SK-N-SH (cell line): ENCODE measurements at regions of chr15 and their contacts with region 1.

Region 1: GRCh38 chr15:66386204-66387123 is at the start of gene MAP2K1:
- DNase-seq: peak; percentile 99
- H3K4me3 ChIP-seq: peak within 1 kb of the TSS; percentile 74 to 92
- H3K27ac ChIP-seq: peak within 1 kb of the TSS; percentile 74 to 78
- H3K4me1 ChIP-seq: peaks cover 6 to 9% of the 10 kb centered on the region in 2 experiments; a peak in 3 of 4 replicates
- H3K27me3 ChIP-seq: no peaks in the 10 kb centered on the region
- CTCF ChIP-seq: peak; percentile 75
- EP300 ChIP-seq: no peak
- RAD21 ChIP-seq: peak; percentile 21; the same call in 1 of the 2 replicates
- polyA plus RNA-seq, gene MAP2K1: 21.8 and 25.5 TPM in 2 replicates

Region 2: GRCh38 chr15:66356345-66357236 is 29.9 kb before region 1 on chr15 and contains the start of gene TIPIN:
- CTCF ChIA-PET with region 1: interaction called, 24 read pairs
- POLR2A ChIA-PET with region 1: no interaction called
- DNase-seq: peak; percentile 93
- H3K4me3 ChIP-seq: peak within 1 kb of the TSS; percentile 64 to 86
- H3K27ac ChIP-seq: peak within 1 kb of the TSS; percentile 47 to 67; a peak in 3 of 4 replicates
- H3K4me1 ChIP-seq: peaks cover 0 to 3% of the 10 kb centered on the region in 2 experiments; a peak in 1 of 4 replicates
- H3K27me3 ChIP-seq: no peaks in the 10 kb centered on the region
- CTCF ChIP-seq: no peak
- EP300 ChIP-seq: peak in 1 of 2 experiments; percentile 37; a peak in 2 of 4 replicates
- RAD21 ChIP-seq: no peak
- polyA plus RNA-seq, gene TIPIN: 5.7 and 6.0 TPM in 2 replicates

Region 3: DNA sequence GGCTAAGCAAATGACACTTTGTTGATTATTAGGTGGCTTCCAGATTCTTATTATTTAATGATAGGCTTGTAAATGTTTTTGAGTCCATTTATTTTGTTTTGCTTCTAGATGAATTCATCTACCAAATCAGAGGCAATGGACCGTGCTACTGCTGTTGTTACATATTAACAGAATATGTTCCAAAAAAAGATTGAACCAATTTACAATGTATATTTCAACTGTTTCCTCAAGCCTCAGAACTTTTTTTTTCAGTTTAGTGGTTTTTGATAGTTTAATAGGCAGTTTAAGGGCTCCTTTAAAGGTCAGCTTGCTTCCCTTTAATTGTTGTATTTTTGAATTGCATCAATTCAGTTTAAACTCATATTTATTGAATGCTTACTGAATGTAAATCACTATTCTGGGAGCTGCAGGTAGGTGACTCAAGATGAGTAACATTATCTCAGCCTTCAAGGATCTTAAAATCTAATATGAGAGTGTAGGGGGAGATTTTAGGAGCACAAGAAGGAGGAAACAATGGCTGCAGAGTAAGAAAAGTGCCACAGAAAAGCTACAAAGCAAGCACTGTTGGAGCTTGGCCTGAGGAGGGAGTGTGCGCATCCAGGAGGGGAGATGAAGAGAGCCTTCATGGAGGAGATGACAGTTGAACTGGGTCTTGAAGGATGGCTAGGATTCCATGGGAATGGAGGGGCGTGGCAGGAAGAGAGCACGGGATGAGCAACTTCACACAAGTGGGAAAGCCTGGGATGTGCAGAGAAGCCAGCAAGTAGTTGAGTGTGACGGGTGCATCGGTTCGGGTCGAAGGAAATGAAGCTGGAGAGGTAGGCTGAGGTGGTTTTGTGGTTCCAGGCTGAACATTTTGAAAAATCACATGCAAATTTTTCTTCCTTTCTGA is 14.9 kb after region 1 on chr15:
- CTCF ChIA-PET with region 1: interaction called, 15 read pairs
- POLR2A ChIA-PET with region 1: no interaction called
- DNase-seq: no peak
- H3K4me3 ChIP-seq: no peak overlapping the region
- H3K27ac ChIP-seq: no peak overlapping the region
- H3K4me1 ChIP-seq: peaks cover 0 to 18% of the 10 kb centered on the region in 2 experiments; a peak in 3 of 4 replicates
- H3K27me3 ChIP-seq: no peaks in the 10 kb centered on the region
- CTCF ChIP-seq: 0 out of 2 replicates have a peak, but pooled peaks have one; percentile 9
- EP300 ChIP-seq: no peak
- RAD21 ChIP-seq: no peak

Region 4: GRCh38 chr15:66497502-66498455 is 111.3 kb after region 1 on chr15 and contains the start of gene SNAPC5:
- CTCF ChIA-PET with region 1: interaction called, 51 read pairs
- POLR2A ChIA-PET with region 1: interaction called, 21 read pairs
- DNase-seq: peak; percentile 93
- H3K4me3 ChIP-seq: peak within 1 kb of the TSS; percentile 91 to 97
- H3K27ac ChIP-seq: peak within 1 kb of the TSS; percentile 65 to 66
- H3K4me1 ChIP-seq: peaks cover 0 to 17% of the 10 kb centered on the region in 2 experiments; a peak in 2 of 4 replicates
- H3K27me3 ChIP-seq: no peaks in the 10 kb centered on the region
- CTCF ChIP-seq: peak; percentile 99
- EP300 ChIP-seq: no peak; a peak in 1 of 4 replicates
- RAD21 ChIP-seq: peak; percentile 38
- polyA plus RNA-seq, gene SNAPC5: 57.8 and 65.0 TPM in 2 replicates